ENCODE measurements at regions of chr7 and their contacts with region 1.

Region 1: DNA sequence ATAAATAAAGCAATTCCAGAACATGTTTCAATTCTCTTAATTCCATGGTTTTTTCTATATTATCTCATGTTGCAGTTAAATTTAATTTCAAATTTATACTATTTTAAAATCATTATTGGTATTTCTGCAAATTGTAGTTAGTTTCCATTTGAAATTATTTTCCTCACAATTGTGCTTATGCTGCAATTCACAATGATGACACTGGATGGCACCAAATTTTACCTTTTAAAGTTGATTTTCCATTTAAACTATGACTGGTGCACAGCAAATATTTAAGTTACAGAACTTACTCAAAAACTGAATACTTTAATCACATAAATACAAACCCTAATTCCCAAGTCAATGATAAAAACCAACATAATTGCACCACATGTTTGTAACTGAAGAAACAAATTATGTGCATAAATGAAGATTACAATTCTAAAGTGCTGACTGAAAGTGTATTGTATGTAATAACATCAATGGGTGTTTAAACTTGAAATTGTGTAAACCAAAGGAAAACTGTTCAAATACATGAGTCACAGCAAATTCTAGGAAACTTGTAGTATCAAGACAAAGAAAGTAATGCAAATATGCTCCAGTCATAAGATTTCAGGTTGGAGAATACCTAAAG is 75.3 kb upstream of the AASS start:
- DNase-seq: peak; percentile 13
- ATAC-seq: no peak
- H3K4me3 ChIP-seq: no peak overlapping the region
- H3K27ac ChIP-seq: no peak overlapping the region
- H3K4me1 ChIP-seq: peaks cover 9% of the 10 kb centered on the region
- H3K27me3 ChIP-seq: no peaks in the 10 kb centered on the region; a peak in 1 of 5 replicates
- CTCF ChIP-seq: peak; percentile 64
- EP300 ChIP-seq: no peak
- POLR2A ChIP-seq: no peak
- RAD21 ChIP-seq: peak; percentile 52; the same call in 1 of the 2 replicates

Region 2: GRCh38 chr7:122092964-122093797 is 126.2 kb before region 1 on chr7:
- CTCF ChIA-PET with region 1: no interaction called
- POLR2A ChIA-PET with region 1: no interaction called
- in situ Hi-C with region 1: no loop called
- intact Hi-C with region 1: loop called (anchors 10 kb)
- DNase-seq: peak; percentile 64
- ATAC-seq: peak; percentile 83
- H3K4me3 ChIP-seq: no peak overlapping the region
- H3K27ac ChIP-seq: no peak overlapping the region
- H3K4me1 ChIP-seq: no peaks in the 10 kb centered on the region
- H3K27me3 ChIP-seq: no peaks in the 10 kb centered on the region
- CTCF ChIP-seq: peak; percentile 75
- EP300 ChIP-seq: no peak
- POLR2A ChIP-seq: no peak
- RAD21 ChIP-seq: no peak

Region 3: GRCh38 chr7:122337011-122337410 is 117.7 kb after region 1 on chr7:
- CTCF ChIA-PET with region 1: no interaction called
- POLR2A ChIA-PET with region 1: no interaction called
- in situ Hi-C with region 1: no loop called
- intact Hi-C with region 1: no loop called
- DNase-seq: no peak
- ATAC-seq: no peak
- H3K4me3 ChIP-seq: no peak overlapping the region
- H3K27ac ChIP-seq: no peak overlapping the region
- H3K4me1 ChIP-seq: no peaks in the 10 kb centered on the region
- H3K27me3 ChIP-seq: no peaks in the 10 kb centered on the region
- CTCF ChIP-seq: no peak
- EP300 ChIP-seq: no peak
- POLR2A ChIP-seq: no peak
- RAD21 ChIP-seq: no peak

Region 4: GRCh38 chr7:122520971-122521555 is 301.7 kb after region 1 on chr7:
- CTCF ChIA-PET with region 1: no interaction called
- POLR2A ChIA-PET with region 1: no interaction called
- in situ Hi-C with region 1: loop called (anchors 5 kb)
- intact Hi-C with region 1: no loop called
- DNase-seq: no peak
- ATAC-seq: no peak
- H3K4me3 ChIP-seq: no peak overlapping the region
- H3K27ac ChIP-seq: no peak overlapping the region
- H3K4me1 ChIP-seq: no peaks in the 10 kb centered on the region
- H3K27me3 ChIP-seq: no peaks in the 10 kb centered on the region
- CTCF ChIP-seq: no peak
- EP300 ChIP-seq: no peak
- POLR2A ChIP-seq: no peak
- RAD21 ChIP-seq: no peak